PC-3 (cell line): ENCODE measurements at regions of chr5 and their contacts with region 1.

Region 1: DNA sequence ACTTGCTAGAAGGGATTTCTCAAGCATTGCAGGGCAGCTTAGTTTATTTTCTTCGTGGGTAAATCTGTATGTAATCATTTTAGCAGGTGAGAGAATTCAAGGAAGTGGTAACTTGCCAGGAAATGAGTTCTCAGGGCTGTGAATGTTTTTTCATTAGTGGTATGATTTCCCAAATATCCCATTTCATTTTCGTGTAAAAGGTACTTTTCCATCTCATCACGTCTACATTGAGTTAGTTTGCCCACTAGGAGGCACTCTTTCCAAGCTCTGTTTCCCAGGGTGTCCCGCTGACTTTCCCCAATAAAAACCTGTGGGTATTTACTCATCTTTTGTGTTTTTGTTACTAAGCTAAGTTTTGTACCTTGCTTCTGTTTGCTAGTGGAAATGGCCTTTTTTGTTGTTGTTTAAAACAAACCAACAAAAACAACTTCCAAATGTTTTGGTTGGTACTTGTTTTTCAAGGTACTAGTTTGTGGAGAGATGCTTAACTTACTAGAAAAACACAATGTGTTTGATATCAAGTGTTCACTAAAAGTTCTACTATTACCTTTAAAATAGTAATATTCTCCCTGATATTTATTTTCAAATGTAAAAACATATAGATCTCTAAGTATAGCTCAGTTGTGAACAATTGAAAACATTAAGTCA is 373.6 kb downstream of the ADGRV1 start:
- DNase-seq: peak; percentile 93
- ATAC-seq: peak; percentile 80
- H3K4me3 ChIP-seq: no peak overlapping the region
- H3K27ac ChIP-seq: peak overlapping the region; percentile 20
- H3K4me1 ChIP-seq: peaks cover 24% of the 10 kb centered on the region
- H3K27me3 ChIP-seq: no peaks in the 10 kb centered on the region
- CTCF ChIP-seq: peak; percentile 94

Region 2: DNA sequence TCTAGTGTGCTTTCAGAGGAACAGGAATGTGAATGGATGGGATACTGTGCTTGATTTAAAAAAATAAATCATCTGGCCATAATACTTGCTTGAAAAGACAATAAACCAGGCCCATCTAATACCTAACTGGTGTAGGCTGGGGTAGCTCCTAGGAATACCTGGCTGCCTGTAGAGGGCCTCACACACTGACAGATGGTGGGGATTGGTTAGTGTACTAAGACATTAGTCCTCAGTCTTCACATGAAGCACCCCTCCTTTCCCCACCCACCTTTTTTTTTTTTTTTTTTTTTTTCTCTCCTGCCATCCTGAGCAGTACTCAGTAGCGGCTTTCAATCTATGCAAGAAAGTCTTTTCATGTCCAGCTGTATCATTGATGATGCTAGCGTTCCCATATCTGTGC is 243.1 kb before region 1 on chr5:
- CTCF ChIA-PET with region 1: no interaction called
- POLR2A ChIA-PET with region 1: no interaction called
- intact Hi-C with region 1: no loop called
- DNase-seq: no peak
- ATAC-seq: peak; percentile 54; the same call in 1 of the 2 replicates
- H3K4me3 ChIP-seq: no peak overlapping the region
- H3K27ac ChIP-seq: no peak overlapping the region
- H3K4me1 ChIP-seq: no peaks in the 10 kb centered on the region
- H3K27me3 ChIP-seq: no peaks in the 10 kb centered on the region
- CTCF ChIP-seq: peak; percentile 32

Region 3: DNA sequence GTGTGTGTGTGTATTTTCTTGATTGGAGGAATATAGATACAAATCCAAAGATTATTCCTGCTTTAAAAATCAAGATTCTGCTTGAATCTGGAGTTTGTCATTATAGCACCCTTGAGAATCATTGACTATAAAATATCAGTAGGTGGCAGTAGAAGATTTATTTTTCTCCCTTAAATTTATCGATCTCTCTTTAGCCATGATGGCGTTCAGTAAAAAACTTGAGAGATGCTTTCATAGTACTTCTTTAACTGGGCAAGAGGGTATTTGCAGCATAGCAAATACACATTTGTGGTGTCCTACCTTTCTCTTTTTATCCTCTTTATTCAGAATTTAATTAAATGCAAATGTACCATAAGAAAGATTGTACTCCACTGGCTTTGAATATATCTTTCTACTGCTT is 65.8 kb before region 1 on chr5:
- CTCF ChIA-PET with region 1: interaction called, 11 read pairs
- POLR2A ChIA-PET with region 1: no interaction called
- intact Hi-C with region 1: loop called (anchors 1 kb)
- DNase-seq: peak; percentile 65
- ATAC-seq: peak; percentile 71
- H3K4me3 ChIP-seq: no peak overlapping the region
- H3K27ac ChIP-seq: no peak overlapping the region
- H3K4me1 ChIP-seq: 0 out of 2 replicates have a peak, but pooled peaks cover 4% of the 10 kb centered on the region
- H3K27me3 ChIP-seq: no peaks in the 10 kb centered on the region
- CTCF ChIP-seq: peak; percentile 77

Region 4: GRCh38 chr5:91030521-91031401 is 98.6 kb after region 1 on chr5:
- CTCF ChIA-PET with region 1: no interaction called
- POLR2A ChIA-PET with region 1: no interaction called
- intact Hi-C with region 1: loop called (anchors 5 kb)
- DNase-seq: peak; percentile 59
- ATAC-seq: peak; percentile 78
- H3K4me3 ChIP-seq: no peak overlapping the region
- H3K27ac ChIP-seq: peak overlapping the region; percentile 25
- H3K4me1 ChIP-seq: peaks cover 20% of the 10 kb centered on the region
- H3K27me3 ChIP-seq: no peaks in the 10 kb centered on the region
- CTCF ChIP-seq: no peak

Region 5: DNA sequence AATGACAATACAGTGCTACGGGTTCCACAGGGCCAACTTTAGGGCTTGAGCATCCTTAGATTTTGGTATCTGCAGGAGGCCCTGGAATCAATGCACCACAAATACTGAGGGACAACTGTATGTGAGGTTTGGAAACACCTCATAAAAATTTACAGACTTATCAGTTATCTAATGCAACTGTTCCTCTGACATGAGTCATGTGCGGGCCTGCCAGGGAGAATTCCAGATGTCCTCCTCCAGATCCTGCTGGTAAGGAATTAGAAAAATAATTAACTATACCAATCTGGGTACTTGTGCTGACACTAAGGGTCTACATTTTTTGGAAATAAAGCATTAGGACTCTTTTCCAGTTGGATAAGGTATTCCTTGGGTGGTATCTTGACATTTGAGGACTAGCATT is 117.6 kb after region 1 on chr5:
- CTCF ChIA-PET with region 1: no interaction called
- POLR2A ChIA-PET with region 1: no interaction called
- intact Hi-C with region 1: loop called (anchors 2 kb)
- DNase-seq: peak; percentile 86
- ATAC-seq: peak; percentile 74
- H3K4me3 ChIP-seq: peak overlapping the region; percentile 20; the same call in 1 of the 2 replicates
- H3K27ac ChIP-seq: peak overlapping the region; percentile 92
- H3K4me1 ChIP-seq: peaks cover 53% of the 10 kb centered on the region
- H3K27me3 ChIP-seq: no peaks in the 10 kb centered on the region
- CTCF ChIP-seq: no peak

Region 6: DNA sequence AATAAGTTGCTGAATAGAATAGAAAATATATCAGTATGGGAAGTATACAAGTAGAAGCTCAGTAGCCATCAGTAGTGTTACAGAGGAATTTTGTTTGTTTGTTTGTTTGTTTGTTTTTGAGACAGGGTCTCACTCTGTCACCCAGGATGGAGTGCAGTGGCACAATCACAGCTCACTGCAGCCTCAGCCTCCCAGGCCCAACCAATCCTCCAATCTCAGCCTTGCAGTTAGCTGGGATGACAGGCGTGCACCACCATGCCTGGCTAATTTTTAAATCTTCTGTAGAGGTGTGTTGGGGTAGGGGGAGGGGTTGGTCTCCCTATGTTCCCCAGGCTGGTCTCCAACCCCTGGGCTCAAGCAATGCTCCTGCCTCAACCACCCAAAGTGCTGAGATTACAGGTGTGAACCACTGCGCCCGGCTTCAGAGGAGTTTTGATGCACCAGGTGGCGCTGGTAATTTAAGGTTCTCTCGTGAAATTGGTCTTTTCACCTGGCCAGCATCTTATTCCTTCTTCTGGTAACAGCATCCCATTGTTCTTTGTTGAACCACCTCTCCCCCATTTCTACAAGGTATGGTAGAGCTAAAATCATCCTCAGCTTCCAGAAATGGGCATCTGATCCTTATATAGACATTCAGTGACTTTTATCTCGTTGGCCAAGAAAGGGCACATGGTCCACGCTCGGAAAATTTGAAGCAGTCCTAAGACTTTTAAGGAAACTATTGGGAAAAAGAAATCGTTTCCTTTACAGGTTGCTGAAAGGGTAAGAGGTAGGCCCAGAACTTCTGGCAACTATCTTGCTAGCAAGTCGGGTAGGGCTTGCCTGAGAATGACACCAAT is 293.9 kb after region 1 on chr5:
- CTCF ChIA-PET with region 1: no interaction called
- POLR2A ChIA-PET with region 1: no interaction called
- intact Hi-C with region 1: loop called (anchors 5 kb)
- DNase-seq: peak; percentile 66
- ATAC-seq: peak; percentile 78
- H3K4me3 ChIP-seq: no peak overlapping the region
- H3K27ac ChIP-seq: no peak overlapping the region
- H3K4me1 ChIP-seq: no peaks in the 10 kb centered on the region
- H3K27me3 ChIP-seq: no peaks in the 10 kb centered on the region
- CTCF ChIP-seq: peak; percentile 77

Region 7: GRCh38 chr5:91307048-91307447 is 374.9 kb after region 1 on chr5:
- CTCF ChIA-PET with region 1: no interaction called
- POLR2A ChIA-PET with region 1: no interaction called
- intact Hi-C with region 1: no loop called
- DNase-seq: no peak
- ATAC-seq: no peak
- H3K4me3 ChIP-seq: no peak overlapping the region
- H3K27ac ChIP-seq: no peak overlapping the region
- H3K4me1 ChIP-seq: peaks cover 11% of the 10 kb centered on the region
- H3K27me3 ChIP-seq: no peaks in the 10 kb centered on the region
- CTCF ChIP-seq: no peak

Region 8: GRCh38 chr5:91419571-91420537 is 487.7 kb after region 1 on chr5:
- CTCF ChIA-PET with region 1: no interaction called
- POLR2A ChIA-PET with region 1: no interaction called
- intact Hi-C with region 1: loop called (anchors 2 kb)
- DNase-seq: peak; percentile 88
- ATAC-seq: peak; percentile 48
- H3K4me3 ChIP-seq: no peak overlapping the region
- H3K27ac ChIP-seq: no peak overlapping the region
- H3K4me1 ChIP-seq: no peaks in the 10 kb centered on the region
- H3K27me3 ChIP-seq: no peaks in the 10 kb centered on the region
- CTCF ChIP-seq: peak; percentile 85